Activated T-helper 1 cell treated with anti-CD3 and anti-CD28 coated beads, Interleukin-12 subunit alpha, Interleukin-12 subunit beta, Interleukin-2, Interleukin-4 antibody, amounts not matched to agents 30 ng/mL and 10 ng/mL and 1 ng/mL, durations not matched to agents 14 hours and 24 hours and 36 hours (primary cell): ENCODE measurements at regions of chr1 and their contacts with region 1.

Region 1: GRCh38 chr1:222897527-222898190 is 82.8 kb downstream of the DISP1 start:
- DNase-seq: no peak
- H3K4me3 Mint-ChIP-seq: no peak overlapping the region
- H3K27ac Mint-ChIP-seq: peak overlapping the region; percentile 51
- H3K4me1 Mint-ChIP-seq: peaks cover 16% of the 10 kb centered on the region
- H3K27me3 Mint-ChIP-seq: peaks cover 4% of the 10 kb centered on the region

Region 2: DNA sequence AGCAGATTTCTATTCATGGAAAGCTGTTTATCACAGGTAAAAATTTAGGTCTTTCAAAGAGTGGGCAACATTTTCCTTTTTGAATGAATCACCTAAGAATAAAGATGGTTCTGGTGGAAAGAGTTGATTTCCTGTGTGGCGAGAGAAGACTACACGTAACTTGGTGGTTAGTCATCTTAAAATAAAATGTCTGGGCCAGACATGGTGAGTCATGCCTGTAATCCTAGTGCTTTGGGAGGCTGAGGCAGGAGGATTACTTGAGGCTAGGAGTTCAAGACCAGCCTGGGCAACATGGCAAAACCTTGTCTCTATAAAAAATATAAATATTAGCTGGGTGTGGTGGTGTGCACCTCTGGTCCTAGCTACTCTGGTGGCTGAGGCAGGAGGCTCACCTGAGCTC is 17.1 kb before region 1 on chr1:
- intact Hi-C with region 1: loop called (anchors 1 kb)
- DNase-seq: no peak
- H3K4me3 Mint-ChIP-seq: no peak overlapping the region
- H3K27ac Mint-ChIP-seq: peak overlapping the region; percentile 40
- H3K4me1 Mint-ChIP-seq: peaks cover 10% of the 10 kb centered on the region
- H3K27me3 Mint-ChIP-seq: no peaks in the 10 kb centered on the region

Region 3: GRCh38 chr1:222938986-222939385 is 41.3 kb after region 1 on chr1:
- intact Hi-C with region 1: no loop called
- DNase-seq: no peak
- H3K4me3 Mint-ChIP-seq: no peak overlapping the region
- H3K27ac Mint-ChIP-seq: no peak overlapping the region
- H3K4me1 Mint-ChIP-seq: no peaks in the 10 kb centered on the region
- H3K27me3 Mint-ChIP-seq: no peaks in the 10 kb centered on the region

Region 4: GRCh38 chr1:223091896-223092295 is 194.2 kb after region 1 on chr1:
- intact Hi-C with region 1: no loop called
- DNase-seq: no peak
- H3K4me3 Mint-ChIP-seq: no peak overlapping the region
- H3K27ac Mint-ChIP-seq: no peak overlapping the region
- H3K4me1 Mint-ChIP-seq: no peaks in the 10 kb centered on the region
- H3K27me3 Mint-ChIP-seq: peaks cover 5% of the 10 kb centered on the region